Left cardiac atrium (tissue), 4 donors: ENCODE measurements at regions of chr18 and their contacts with region 1.

Region 1: DNA sequence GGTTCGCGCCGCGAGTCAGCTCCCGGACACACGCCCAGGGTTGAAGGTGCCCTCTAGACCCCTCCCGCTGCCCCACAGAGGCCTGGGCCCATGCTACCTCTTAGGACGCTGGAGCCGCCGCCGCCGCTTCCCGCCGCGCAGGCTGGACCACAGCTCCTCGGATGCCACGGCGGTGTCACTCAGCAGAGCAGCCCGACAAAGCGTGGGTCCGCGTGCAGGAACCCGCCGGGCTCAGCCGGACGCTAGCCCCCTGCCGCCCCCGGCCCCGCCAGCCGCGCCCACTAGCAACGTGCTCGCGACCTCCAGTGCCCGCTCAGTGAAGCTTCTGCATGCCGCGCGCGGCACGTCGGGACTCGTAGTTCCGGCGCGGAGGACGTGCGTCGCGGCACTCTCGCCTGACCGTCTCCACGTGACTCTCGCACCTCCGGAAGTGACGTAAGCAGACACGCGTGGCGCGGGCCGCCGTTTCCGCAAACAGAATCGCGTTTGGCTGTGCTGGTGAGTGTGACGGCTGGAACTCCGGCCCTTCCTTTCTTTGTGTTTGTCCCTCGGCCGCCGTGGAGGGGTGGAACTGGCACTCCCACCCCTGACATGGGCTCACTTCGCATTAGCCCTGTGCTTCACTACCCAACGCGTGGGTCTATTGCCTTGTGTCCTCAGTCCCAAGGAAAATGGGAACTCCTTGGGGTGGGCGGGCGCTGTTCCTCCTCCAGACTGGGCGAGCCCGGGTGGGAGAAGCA is at the starts of genes FAM210A and RNMT:
- DNase-seq: peak; percentile 98
- ATAC-seq: peak; percentile 98
- total RNA-seq, gene FAM210A: 39.7 to 58.4 TPM
- total RNA-seq, gene RNMT: 21.9 to 39.1 TPM

Region 2: DNA sequence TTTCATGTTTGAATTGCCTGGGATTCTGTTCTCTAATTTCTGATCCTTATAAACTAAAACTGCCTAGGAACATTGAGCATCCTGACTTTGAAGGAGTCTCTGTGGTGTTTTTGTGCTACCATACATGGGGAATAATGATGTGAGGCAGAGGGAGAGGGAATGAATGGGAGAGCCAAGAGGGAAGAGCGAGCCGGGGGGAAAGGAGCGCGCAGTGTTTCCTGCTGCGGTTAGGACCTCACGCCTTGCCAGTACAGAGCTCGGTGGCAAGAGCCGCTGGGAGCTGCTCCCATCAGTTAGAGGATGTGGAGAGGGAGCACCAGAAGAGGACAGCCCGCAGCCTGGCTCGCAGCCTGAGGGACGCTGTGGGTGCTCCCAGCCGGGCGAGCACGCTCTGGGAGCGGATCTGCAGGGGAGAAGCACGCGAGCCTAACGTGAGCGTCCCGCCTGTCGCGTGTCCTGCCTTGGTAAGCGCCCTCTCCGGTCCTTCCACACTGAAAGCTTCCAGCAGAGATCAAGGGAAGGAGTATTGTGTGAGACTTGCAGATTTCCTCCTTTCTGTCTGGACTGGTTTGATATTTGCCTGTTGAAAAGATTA is 114.7 kb before region 1 on chr18:
- intact Hi-C with region 1: loop called in 1 of 2 experiments (anchors 10 kb)
- DNase-seq: peak; percentile 74
- ATAC-seq: peak; percentile 80 to 83

Region 3: GRCh38 chr18:13800505-13801259 is 74.3 kb after region 1 on chr18:
- intact Hi-C with region 1: loop called in 1 of 2 experiments (anchors 10 kb)
- DNase-seq: peak; percentile 82
- ATAC-seq: peak; percentile 94 to 99